CD4-positive, alpha-beta T cell (primary cell): ENCODE measurements at regions of chr5 and their contacts with region 1.

Region 1: DNA sequence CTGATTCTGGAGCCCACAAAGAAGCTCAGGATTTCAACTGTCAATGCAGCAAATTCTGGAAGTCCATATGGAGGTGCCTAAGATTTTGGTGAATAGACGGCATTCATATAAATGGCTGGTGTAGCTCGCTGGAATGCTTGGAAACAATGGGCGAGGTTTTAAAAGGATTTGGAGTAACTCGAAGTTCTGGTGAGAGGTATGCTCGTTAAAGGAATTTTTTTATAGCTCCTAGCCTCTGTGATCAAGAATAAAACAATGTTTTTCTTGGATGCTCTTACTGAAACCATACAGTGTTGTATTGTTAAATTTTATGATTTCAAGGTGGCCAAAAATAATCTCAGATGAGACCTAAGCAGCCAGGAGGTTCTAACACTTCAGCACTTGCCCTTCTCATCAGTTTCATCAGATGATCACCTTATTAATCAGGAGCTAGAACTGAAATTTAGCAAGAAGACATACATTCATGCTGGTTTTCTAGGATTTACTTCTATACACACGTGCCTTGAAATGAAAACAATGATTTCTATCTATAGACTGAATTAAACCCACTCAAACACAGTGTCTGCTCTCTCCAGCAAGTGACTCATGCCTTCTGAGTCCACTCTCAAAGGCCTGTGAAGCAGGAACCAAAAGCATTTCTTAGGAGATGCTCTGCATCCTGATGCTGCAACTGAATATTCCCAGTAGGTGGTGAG is 79.2 kb downstream of the OTULIN start:
- DNase-seq: no peak
- ATAC-seq: no peak
- H3K4me3 ChIP-seq: no peak overlapping the region
- H3K4me3 Mint-ChIP-seq: no peak overlapping the region
- H3K27ac ChIP-seq: no peak overlapping the region
- H3K27ac Mint-ChIP-seq: peak overlapping the region; percentile 68
- H3K4me1 ChIP-seq: peaks cover 6% of the 10 kb centered on the region
- H3K4me1 Mint-ChIP-seq: peaks cover 34% of the 10 kb centered on the region
- H3K27me3 ChIP-seq: no peaks in the 10 kb centered on the region
- H3K27me3 Mint-ChIP-seq: no peaks in the 10 kb centered on the region
- CTCF ChIP-seq: no peak

Region 2: GRCh38 chr5:14714706-14715105 is 29.0 kb before region 1 on chr5:
- CTCF ChIA-PET with region 1: no interaction called
- POLR2A ChIA-PET with region 1: no interaction called
- intact Hi-C with region 1: no loop called
- DNase-seq: no peak
- ATAC-seq: no peak
- H3K4me3 ChIP-seq: no peak overlapping the region
- H3K4me3 Mint-ChIP-seq: no peak overlapping the region
- H3K27ac ChIP-seq: peak overlapping the region in 1 of 2 donors; percentile 22
- H3K27ac Mint-ChIP-seq: peak overlapping the region; percentile 61
- H3K4me1 ChIP-seq: peaks cover 5% of the 10 kb centered on the region
- H3K4me1 Mint-ChIP-seq: peaks cover 30% of the 10 kb centered on the region
- H3K27me3 ChIP-seq: no peaks in the 10 kb centered on the region
- H3K27me3 Mint-ChIP-seq: no peaks in the 10 kb centered on the region
- CTCF ChIP-seq: no peak

Region 3: GRCh38 chr5:14809369-14810155 is 65.8 kb after region 1 on chr5:
- CTCF ChIA-PET with region 1: no interaction called
- POLR2A ChIA-PET with region 1: no interaction called
- intact Hi-C with region 1: loop called in 1 of 2 experiments (anchors 10 kb)
- DNase-seq: peak; percentile 26 to 87 (median 66)
- ATAC-seq: peak; percentile 88
- H3K4me3 ChIP-seq: peak overlapping the region; percentile 26
- H3K4me3 Mint-ChIP-seq: peak overlapping the region; percentile 71
- H3K27ac ChIP-seq: peak overlapping the region; percentile 53 to 55
- H3K27ac Mint-ChIP-seq: peak overlapping the region; percentile 90
- H3K4me1 ChIP-seq: peaks cover 43% of the 10 kb centered on the region
- H3K4me1 Mint-ChIP-seq: peaks cover 76% of the 10 kb centered on the region
- H3K27me3 ChIP-seq: no peaks in the 10 kb centered on the region
- H3K27me3 Mint-ChIP-seq: no peaks in the 10 kb centered on the region
- CTCF ChIP-seq: no peak